ENCODE measurements at regions of chr6 and their contacts with region 1.

Region 1: DNA sequence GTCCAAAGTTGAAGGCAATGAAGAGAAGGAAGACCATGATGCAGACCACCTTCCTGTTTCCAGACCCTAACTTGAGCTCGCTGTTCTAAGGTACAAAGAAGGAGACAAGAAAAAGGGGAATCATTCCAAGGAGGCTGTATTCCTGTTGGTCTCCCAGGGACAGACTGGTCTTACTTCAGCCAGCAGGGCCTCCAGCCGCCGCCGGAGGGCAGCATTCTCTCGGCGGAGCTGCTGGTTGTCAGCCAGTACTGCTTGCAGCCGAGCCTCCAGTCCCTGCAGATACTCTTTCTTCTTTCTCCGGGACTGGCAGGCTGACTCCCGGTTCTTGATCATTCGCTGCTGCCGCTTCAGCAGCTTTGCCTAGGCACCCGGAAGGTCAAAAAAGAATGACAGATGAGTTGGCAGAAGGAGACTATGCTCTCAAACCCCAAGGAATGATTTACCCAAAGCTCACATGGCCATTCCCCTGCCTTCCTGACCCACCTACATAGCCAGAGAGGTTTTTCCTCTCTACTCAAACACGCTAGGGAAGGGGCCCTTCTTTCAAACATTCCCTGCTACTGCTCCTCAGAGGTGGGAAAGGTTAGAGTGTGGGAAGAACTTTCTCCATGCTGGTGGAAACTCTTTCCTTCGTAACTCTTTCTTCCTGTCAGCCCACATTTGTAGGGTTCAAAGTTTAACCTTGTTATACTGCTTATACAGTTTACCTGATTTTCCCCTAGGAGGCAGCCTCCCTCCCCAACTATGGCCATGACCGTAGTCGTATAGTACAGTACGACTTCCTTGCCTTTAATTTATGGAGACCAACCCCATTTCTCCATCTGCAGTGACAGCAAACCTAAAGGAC is 9.0 kb downstream of the ATF6B start:
- DNase-seq: peak; percentile 65
- H3K4me3 ChIP-seq: no peak overlapping the region
- H3K27ac ChIP-seq: no peak overlapping the region
- H3K4me1 ChIP-seq: peaks cover 5% of the 10 kb centered on the region
- H3K27me3 ChIP-seq: no peaks in the 10 kb centered on the region
- CTCF ChIP-seq: peak; percentile 88 to 90

Region 2: DNA sequence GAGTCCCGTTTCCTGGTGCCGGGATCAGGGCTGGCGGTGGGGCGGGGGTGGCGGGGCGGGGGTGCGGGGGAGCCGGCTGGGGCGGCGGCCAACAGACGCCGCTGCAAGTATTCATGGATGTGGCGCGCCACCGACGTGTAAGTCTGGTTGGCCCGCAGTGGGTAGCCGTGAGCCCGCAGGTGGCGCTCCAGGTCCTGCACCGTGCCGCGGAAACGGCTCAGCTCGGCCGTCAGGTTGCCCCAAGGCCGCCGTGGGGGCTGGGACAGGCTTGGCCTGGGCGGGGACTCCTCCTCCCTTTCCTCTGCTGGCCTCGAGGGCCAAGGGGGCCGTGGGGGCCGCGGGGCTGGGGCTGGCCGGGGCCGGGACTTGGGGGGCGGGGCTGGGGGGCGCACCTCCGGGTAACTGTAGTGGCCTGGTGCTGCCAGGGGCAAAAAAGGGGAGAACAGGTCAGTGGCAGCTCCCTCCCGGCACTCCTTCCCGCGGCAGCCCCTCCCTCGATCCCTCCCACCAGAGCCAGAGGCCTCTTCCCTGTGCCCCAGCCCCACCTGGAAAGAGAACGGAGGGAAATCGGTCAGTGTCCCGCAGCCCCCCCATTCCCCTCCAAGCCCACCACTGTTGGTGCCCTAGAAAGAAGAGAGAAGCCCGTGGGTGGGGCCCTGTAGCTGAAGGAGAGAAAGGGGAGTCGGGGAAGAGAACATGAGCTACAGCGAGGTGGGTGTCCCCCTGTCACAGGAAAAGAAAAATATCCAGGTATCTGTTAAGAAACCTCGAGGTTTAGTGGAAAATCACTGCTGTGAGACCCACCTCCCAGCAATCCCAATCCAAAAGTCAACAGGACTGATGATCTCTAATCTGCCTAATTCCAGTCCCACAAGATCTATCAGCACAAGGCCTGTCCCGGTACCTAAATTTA is 31.2 kb before region 1 on chr6:
- CTCF ChIA-PET with region 1: no interaction called
- dilution Hi-C with region 1: no loop called
- in situ Hi-C with region 1: no loop called
- intact Hi-C with region 1: loop called (anchors 1 kb)
- DNase-seq: peak; percentile 34
- H3K4me3 ChIP-seq: no peak overlapping the region
- H3K27ac ChIP-seq: no peak overlapping the region
- H3K4me1 ChIP-seq: peaks cover 13% of the 10 kb centered on the region
- H3K27me3 ChIP-seq: peaks cover 14% of the 10 kb centered on the region
- CTCF ChIP-seq: peak; percentile 21 to 61

Region 3: DNA sequence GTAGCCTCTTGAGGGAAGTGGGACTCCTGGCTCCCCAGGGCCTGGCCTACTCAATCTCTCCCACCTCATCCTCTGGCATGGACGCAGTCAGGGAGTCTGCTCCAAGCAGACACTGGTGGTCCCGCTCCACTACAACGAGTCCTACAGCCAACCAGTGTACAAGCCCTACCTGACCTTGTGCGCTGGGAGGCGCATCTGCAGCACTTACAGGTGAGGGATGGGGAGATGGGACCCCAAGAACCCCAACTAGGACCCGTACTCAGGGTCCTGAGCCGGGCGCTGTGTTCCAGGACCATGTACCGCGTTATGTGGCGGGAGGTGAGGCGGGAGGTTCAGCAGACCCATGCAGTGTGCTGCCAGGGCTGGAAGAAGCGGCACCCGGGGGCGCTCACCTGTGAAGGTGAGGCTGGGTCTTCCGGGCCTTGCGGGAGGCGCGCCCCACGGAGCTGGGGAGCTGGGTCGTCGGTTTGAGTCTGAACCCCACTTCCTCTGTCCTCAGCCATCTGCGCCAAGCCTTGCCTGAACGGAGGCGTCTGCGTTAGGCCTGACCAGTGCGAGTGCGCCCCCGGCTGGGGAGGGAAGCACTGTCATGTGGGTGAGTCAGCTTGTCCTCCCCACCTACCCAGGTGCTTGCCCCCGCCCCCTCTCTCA is 47.5 kb after region 1 on chr6:
- CTCF ChIA-PET with region 1: no interaction called
- dilution Hi-C with region 1: no loop called
- in situ Hi-C with region 1: no loop called
- intact Hi-C with region 1: no loop called
- DNase-seq: no peak
- H3K4me3 ChIP-seq: no peak overlapping the region
- H3K27ac ChIP-seq: no peak overlapping the region
- H3K4me1 ChIP-seq: no peaks in the 10 kb centered on the region
- H3K27me3 ChIP-seq: no peaks in the 10 kb centered on the region
- CTCF ChIP-seq: no peak

Region 4: DNA sequence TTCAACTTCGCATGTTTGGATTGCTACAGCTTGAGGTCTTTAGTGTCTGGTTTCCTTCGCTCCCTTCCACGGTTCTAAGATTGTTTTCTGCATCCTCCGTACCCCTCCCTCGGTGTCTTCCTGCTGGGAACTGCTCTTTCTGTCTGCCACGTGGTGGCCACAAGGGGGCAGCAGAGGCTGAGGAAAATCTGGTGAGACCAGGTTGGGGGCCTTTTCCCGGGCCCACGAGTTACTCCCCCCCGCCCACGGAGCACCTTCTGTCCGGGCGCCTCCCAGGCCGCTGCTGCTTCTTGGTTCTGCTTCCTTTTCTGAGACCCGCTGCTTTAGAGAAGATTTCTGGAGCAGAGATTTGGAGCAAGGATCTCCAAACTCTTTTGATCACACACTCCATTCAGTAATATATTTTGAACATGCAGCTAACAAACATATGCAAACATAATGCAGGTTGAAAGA is 126.0 kb after region 1 on chr6:
- CTCF ChIA-PET with region 1: no interaction called
- dilution Hi-C with region 1: no loop called
- in situ Hi-C with region 1: no loop called
- intact Hi-C with region 1: loop called (anchors 2 kb)
- DNase-seq: peak; percentile 33
- H3K4me3 ChIP-seq: no peak overlapping the region
- H3K27ac ChIP-seq: no peak overlapping the region
- H3K4me1 ChIP-seq: no peaks in the 10 kb centered on the region
- H3K27me3 ChIP-seq: no peaks in the 10 kb centered on the region
- CTCF ChIP-seq: peak; percentile 77 to 88

Measured in mammary epithelial cell (primary cell).